ENCODE measurements at regions of chr17 and their contacts with region 1.

Region 1: GRCh38 chr17:21043286-21044232 is 748 bp upstream of the USP22 start:
- DNase-seq: peak; percentile 95 to 98
- H3K4me3 ChIP-seq: peak overlapping the region; percentile 65
- H3K27ac ChIP-seq: peak overlapping the region; percentile 33; the same call in 1 of the 2 replicates
- H3K4me1 ChIP-seq: peaks cover 20% of the 10 kb centered on the region
- H3K27me3 ChIP-seq: no peaks in the 10 kb centered on the region
- CTCF ChIP-seq: peak; percentile 82

Region 2: DNA sequence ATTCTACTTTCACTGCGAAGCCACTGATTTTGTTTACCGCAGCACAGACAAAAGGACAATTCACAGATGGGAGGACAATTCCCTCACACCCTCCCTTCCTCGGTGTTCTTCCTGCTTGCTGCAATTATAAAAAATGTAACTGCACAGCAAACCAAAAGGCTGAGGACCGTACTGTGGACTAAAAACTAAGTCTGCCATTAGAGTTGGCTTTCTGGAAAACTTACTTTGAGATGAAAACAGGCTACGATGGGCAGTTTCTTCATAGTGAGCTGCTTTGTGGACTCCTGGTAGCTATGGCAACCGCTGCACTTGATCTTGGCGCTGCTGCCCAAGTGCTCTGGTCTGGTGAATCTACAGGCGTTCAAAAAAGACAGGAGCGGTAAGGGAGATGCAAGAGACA is 35.9 kb before region 1 on chr17:
- CTCF ChIA-PET with region 1: no interaction called
- POLR2A ChIA-PET with region 1: no interaction called
- intact Hi-C with region 1: no loop called
- DNase-seq: no peak
- H3K4me3 ChIP-seq: no peak overlapping the region
- H3K27ac ChIP-seq: no peak overlapping the region
- H3K4me1 ChIP-seq: no peaks in the 10 kb centered on the region
- H3K27me3 ChIP-seq: no peaks in the 10 kb centered on the region
- CTCF ChIP-seq: no peak

Region 3: GRCh38 chr17:21021208-21021803 is 22.3 kb before region 1 on chr17:
- CTCF ChIA-PET with region 1: no interaction called
- POLR2A ChIA-PET with region 1: no interaction called
- intact Hi-C with region 1: no loop called
- DNase-seq: no peak
- H3K4me3 ChIP-seq: no peak overlapping the region
- H3K27ac ChIP-seq: no peak overlapping the region
- H3K4me1 ChIP-seq: no peaks in the 10 kb centered on the region
- H3K27me3 ChIP-seq: no peaks in the 10 kb centered on the region
- CTCF ChIP-seq: no peak

Region 4: DNA sequence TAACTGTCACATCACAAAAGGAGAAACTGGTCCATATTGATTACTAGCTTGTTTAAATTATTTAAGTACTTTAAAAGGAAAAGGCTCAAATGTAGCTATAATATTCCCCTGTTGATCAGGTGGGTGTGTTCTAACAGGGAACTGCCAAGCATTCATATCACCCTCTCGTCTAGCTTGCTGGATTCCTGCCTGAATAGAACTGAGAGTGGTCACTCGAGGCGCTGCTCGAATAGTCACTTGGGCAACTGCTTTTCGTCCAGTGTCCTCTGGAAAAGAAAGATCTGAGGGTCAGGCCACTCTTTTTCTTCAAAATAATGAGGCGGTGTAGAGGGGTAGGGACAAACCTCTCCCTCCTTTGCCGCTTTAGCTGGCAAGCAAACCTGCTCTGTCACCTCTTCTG is 35.6 kb after region 1 on chr17:
- CTCF ChIA-PET with region 1: interaction called, 4 read pairs
- POLR2A ChIA-PET with region 1: interaction called, 17 read pairs
- intact Hi-C with region 1: no loop called
- DNase-seq: no peak
- H3K4me3 ChIP-seq: no peak overlapping the region
- H3K27ac ChIP-seq: no peak overlapping the region
- H3K4me1 ChIP-seq: no peaks in the 10 kb centered on the region
- H3K27me3 ChIP-seq: peaks cover 36% of the 10 kb centered on the region
- CTCF ChIP-seq: no peak

Region 5: DNA sequence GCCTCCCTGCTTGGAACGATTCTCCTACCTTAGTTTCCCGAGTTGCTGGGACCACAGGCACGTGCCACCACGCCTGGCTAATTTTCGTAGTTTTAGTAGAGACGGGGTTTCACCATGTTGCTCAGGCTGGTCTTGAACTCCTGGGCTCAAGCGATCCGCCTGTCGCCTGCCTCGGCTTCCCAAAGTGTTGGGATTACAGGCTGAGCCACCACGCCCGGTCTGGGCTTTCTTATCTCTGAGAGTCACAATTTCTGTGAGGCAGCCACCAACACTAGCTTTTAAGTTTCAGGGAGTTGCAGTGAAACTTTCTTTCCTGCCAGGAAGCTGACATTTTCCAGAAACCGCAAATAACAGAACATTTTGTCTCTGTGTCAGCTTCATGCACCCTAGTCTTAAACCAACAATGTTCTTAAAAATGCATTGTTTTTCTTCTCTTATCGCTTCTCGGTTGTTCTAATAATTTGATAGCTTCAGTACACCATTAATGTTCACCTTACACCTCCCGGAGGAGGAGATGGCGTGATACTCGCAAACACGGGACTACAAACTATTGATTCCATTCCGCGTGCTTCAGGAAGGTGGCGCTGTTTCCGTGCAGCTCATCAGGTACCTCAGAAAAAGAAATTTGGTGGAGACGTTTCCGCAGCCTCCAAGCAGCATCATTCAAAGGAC is 75.8 kb after region 1 on chr17:
- CTCF ChIA-PET with region 1: interaction called, 4 read pairs
- POLR2A ChIA-PET with region 1: interaction called, 16 read pairs
- intact Hi-C with region 1: no loop called
- DNase-seq: peak; percentile 51 to 64
- H3K4me3 ChIP-seq: no peak overlapping the region
- H3K27ac ChIP-seq: no peak overlapping the region
- H3K4me1 ChIP-seq: no peaks in the 10 kb centered on the region
- H3K27me3 ChIP-seq: no peaks in the 10 kb centered on the region
- CTCF ChIP-seq: peak; percentile 89

Region 6: DNA sequence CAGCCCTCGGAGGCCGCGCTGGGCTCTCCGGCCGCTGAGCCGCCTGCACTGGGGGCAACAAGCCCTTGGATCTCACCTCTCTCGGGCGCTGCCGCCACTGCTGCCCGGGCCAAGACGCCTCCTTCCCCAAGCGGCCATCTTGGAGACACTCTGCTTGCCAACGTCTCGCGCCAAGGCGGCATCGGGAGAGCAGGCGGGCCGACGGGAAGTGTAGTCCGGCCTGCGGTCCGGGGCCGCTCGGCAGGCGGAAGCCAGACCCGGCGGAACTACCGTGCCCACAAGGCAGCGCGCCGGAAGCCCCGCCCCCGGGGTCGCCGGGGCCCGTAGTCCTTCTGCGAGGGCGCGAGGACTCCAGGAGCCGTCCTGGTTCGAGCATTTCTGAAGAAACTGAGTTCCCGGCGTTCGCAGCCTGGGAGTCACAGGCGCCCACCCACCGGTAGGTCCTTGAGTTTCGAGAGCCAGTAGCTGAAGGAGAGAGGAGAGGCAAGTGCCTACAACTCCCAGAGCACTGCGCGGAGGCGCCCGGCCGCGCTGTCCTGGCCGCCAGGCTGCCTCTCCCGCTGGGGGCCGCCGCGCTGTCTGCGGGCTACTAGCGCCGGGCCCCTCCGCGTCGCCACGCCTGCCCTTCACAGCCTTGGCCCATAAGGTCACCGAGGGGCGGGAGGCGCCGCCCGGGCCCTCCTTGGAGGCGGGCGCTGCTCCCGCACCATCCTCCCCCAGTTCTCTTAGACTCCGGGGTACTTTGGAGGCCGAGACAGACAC is 170.6 kb after region 1 on chr17 and contains the start of gene TMEM11:
- CTCF ChIA-PET with region 1: interaction called, 4 read pairs
- POLR2A ChIA-PET with region 1: no interaction called
- intact Hi-C with region 1: loop called (anchors 2 kb)
- DNase-seq: peak; percentile 86 to 97
- H3K4me3 ChIP-seq: peak within 1 kb of the TSS; percentile 97
- H3K27ac ChIP-seq: peak within 1 kb of the TSS; percentile 81
- H3K4me1 ChIP-seq: peaks cover 32% of the 10 kb centered on the region
- H3K27me3 ChIP-seq: no peaks in the 10 kb centered on the region
- CTCF ChIP-seq: no peak
- total RNA-seq, gene TMEM11: 34.2 and 37.6 TPM in 2 replicates

Region 7: DNA sequence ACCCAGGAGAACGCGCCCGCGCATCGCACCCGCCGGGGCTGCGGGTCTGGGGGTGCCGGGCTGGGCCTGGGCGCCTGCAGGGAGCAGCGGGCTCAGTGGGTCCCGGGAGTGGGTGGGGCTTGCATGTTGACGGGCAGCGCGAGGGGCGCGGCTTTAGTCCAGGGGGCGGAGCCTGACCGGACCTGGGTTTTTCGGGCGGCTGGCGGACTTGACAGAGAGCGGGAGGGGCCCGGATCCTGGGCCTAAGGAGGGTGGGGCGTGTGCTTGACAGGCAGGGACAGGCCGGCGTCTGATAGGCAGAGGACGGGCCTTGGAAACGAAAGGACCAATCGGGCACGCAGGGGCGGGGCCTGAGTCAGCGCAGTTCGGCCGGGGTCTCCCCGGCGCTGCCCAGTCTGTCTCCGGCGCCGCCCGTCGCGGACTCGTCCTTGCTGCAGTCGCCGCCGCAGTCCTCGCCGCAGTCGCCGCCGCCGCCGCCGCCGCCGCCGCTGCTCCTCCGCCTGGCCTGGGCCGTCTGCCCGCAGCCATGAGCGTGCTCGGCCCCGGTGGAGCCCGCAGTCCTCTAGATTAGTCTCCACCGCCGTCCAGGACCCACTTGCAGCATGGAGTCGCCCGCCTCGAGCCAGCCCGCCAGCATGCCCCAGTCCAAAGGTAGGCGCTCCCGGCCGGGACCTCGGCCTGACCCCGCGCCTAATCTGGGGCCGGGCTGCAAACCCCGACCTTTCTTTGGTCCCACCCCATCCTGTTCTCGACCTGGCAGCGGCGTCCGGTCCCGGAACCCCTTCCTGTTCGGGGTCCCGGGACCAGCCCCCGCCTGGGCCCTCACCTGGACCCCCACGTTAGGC is 241.0 kb after region 1 on chr17 and contains the start of gene MAP2K3:
- CTCF ChIA-PET with region 1: no interaction called
- POLR2A ChIA-PET with region 1: interaction called, 8 read pairs
- intact Hi-C with region 1: loop called (anchors 2 kb)
- DNase-seq: peak; percentile 96 to 100
- H3K4me3 ChIP-seq: peak within 1 kb of the TSS; percentile 76
- H3K27ac ChIP-seq: peak within 1 kb of the TSS; percentile 96
- H3K4me1 ChIP-seq: peaks cover 46% of the 10 kb centered on the region
- H3K27me3 ChIP-seq: no peaks in the 10 kb centered on the region
- CTCF ChIP-seq: no peak
- total RNA-seq, gene MAP2K3: 89.2 and 98.1 TPM in 2 replicates

Measured in PC-9 (cell line).